Mammary epithelial cell (primary cell): ENCODE measurements at regions of chr20 and their contacts with region 1.

Region 1: DNA sequence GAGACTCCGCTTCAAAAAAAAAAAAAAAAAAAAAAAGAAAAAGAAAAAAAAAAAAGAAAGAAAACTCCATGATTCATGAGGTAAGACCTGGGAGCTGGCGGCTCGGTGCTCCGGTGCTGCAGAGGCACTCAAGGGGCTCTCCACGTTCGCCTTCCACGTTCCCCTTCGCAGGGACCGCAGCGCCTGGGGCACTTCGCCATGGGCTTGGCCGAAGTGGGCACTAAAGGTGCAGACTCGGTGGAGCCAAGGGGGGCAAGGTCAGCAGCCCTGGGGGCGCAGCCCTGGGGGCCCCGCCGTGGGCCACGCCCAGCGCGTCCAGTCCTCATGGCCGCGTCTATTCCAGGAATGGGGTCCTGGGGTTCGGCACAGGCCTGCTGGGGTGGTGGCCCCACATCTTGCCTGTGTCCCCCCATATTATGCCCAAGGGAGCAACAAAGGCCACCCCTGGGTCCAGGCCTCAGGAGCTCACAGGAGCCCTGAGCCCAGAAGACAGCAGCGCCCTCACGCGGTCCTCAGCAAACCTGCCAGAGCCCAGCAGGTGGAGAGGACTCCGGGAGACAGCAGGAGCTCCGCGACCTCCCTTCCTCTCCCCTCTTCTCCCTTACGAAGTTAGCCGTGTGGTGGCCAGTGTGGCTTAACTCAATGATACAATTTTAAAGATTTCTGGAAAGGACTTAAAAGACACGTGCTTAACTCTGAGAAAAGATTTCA is 21.9 kb downstream of the ZBTB46 start:
- DNase-seq: no peak
- H3K4me3 ChIP-seq: no peak overlapping the region
- H3K27ac ChIP-seq: no peak overlapping the region
- H3K4me1 ChIP-seq: no peaks in the 10 kb centered on the region
- H3K27me3 ChIP-seq: no peaks in the 10 kb centered on the region
- CTCF ChIP-seq: no peak

Region 2: DNA sequence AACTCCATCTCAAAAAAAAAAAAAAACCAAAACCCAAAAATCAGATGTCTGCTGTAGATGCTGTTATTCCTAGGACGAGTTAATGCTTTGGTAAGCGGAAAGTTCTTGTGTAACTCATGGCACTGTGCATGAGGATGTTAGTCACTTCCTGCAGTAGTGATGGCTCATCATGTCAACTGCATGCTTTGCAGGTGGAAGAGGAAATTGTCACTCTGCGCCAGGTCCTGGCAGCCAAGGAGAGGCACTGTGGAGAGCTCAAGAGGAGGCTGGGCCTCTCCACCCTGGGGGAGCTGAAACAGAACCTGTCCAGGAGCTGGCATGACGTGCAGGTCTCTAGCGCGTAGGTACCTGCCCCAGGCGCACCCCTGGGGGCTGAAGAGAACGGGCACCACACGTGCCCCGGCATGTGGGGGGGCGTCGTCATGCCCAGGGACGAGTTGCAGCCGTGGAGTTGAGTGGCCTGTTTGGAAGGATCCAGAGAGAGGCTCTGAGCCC is 64.4 kb after region 1 on chr20:
- CTCF ChIA-PET with region 1: interaction called, 13 read pairs
- dilution Hi-C with region 1: no loop called
- in situ Hi-C with region 1: no loop called
- intact Hi-C with region 1: no loop called
- DNase-seq: peak; percentile 89
- H3K4me3 ChIP-seq: no peak overlapping the region
- H3K27ac ChIP-seq: peak overlapping the region; percentile 40
- H3K4me1 ChIP-seq: peaks cover 12% of the 10 kb centered on the region
- H3K27me3 ChIP-seq: no peaks in the 10 kb centered on the region
- CTCF ChIP-seq: no peak